Sciatic nerve (tissue), 2 donors: ENCODE measurements at regions of chr4 and their contacts with region 1.

Region 1: DNA sequence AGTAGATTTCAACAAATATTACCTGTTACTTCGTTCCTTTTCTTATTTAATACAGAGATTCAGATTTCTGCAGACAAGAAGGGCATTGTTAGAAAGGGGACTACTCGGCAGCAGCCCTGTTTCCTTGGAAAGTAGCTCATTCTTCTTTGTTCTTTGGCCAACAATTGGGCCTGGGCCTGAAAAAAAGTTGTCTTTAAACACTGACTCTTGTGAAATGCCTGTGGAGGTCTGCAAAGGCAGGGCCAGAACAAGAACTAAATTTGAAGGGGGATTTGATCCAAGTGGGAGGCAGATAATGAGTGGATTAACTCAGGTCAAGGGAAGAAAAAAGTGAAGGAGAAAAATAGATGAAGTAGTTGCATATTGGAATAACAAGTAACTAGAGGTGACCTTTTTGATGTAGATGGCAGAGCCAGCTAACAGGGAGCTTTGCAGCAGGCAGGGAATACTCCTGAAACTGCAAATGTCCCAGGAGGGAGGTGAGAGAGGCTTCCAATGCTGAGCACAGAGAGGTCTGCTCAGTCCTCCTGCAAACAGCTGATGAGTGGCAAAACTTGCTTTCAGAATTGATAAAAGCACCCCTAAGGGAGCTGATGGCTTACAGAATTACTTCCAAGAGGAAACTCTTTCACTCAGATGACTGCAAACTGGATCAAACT is 393.2 kb upstream of the HS3ST1 start:
- DNase-seq: no peak
- ATAC-seq: peak; percentile 74

Region 2: GRCh38 chr4:11376571-11376970 is 445.3 kb before region 1 on chr4:
- intact Hi-C with region 1: no loop called
- DNase-seq: no peak
- ATAC-seq: no peak

Region 3: DNA sequence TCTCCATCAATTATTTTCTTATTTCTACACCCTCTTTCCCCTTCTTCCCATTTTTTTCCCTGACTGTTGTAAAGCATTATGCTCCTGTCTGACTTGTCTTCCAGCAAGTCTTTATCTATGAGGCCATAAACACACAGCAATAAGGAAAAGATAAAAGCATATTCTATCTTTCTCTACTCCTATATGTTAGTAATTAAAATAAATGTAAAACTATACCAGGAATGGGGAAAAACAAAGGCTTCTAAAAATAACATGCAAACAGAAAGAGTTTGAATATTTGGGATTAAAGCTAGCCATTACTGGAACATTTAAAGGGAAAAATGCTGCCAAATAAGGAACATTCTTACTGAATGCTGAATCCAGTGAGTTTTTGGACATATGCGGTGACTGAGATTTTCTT is 78.5 kb after region 1 on chr4:
- intact Hi-C with region 1: no loop called
- DNase-seq: no peak
- ATAC-seq: no peak

Region 4: DNA sequence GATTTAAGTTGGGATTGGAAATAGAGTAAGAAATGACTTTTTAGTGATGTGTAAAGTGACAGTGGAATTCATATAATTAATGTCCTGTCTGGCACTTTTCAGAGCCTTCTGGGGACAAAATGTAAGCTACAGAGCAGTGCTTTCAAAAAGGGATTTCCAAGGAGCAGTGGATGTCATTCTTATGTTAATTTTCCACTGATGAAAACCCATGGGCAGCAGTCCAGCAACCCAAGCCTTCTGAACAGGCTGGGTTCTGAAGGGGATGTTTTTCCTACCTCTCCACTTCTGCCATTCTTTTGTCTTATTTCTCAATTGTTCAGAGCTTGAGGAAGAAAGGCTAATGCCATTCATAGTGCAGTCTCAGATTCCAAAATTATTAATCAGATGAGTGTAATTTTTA is 324.4 kb after region 1 on chr4:
- intact Hi-C with region 1: loop called (anchors 10 kb)
- DNase-seq: no peak
- ATAC-seq: no peak

Region 5: DNA sequence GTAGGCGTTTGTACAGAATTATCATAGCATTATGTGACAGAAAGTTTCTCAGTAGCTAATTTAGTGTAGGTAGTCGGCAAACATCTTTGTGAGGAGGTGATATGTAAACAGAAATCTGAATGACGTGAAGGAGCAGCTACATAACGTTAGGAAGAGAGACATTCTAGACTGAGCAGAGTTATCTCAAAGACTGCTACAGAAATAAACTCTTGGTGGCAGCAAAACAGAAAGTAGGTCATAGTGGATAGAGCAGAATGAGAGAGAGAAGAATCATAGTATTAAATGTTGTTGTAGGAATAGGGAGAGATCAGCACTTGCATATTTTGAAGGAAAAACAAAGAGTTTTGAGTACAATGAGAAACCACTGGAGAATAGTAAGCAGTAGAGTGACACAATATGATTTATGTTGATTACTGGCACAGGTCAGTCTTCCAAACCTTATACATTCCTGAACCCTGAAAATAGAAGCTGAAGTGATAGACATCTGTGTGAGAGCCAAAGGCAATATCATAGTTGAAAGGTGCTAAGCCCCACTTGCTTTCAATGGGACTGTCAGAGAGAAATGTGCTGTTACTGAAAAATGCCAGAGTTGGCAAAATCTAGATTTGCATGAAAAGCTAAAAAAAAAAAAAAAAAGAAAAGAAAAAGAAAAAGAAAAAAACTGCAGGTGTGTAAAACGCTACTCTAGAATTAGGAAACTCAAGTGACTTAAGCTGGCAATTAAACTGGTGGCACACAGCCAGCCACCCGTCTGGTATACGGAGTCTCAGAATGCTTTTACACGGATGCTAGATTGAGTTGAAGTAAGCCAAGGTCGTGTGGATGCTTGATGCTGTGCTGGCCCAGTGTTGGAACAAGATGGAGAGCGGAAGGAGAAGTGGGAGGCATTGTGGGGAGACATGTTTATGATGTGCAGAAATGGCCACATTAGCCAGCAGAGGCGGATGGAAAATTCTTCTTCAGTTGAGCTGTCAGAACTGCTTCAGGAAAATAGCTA is 357.0 kb after region 1 on chr4:
- intact Hi-C with region 1: no loop called
- DNase-seq: no peak
- ATAC-seq: no peak